Upper lobe of right lung (tissue), 1 donor: ENCODE measurements at regions of chr18 and their contacts with region 1.

Region 1: GRCh38 chr18:62186774-62187542 is at the starts of genes PIGN and RELCH:
- DNase-seq: peak; percentile 95
- ATAC-seq: peak; percentile 98
- H3K4me3 ChIP-seq: peak within 1 kb of the TSS; percentile 97
- H3K27ac ChIP-seq: peak within 1 kb of the TSS; percentile 87
- H3K4me1 ChIP-seq: peaks cover 27% of the 10 kb centered on the region
- H3K27me3 ChIP-seq: no peaks in the 10 kb centered on the region
- CTCF ChIP-seq: no peak
- total RNA-seq, gene PIGN: 25.2 TPM
- total RNA-seq, gene RELCH: 30.0 TPM

Region 2: DNA sequence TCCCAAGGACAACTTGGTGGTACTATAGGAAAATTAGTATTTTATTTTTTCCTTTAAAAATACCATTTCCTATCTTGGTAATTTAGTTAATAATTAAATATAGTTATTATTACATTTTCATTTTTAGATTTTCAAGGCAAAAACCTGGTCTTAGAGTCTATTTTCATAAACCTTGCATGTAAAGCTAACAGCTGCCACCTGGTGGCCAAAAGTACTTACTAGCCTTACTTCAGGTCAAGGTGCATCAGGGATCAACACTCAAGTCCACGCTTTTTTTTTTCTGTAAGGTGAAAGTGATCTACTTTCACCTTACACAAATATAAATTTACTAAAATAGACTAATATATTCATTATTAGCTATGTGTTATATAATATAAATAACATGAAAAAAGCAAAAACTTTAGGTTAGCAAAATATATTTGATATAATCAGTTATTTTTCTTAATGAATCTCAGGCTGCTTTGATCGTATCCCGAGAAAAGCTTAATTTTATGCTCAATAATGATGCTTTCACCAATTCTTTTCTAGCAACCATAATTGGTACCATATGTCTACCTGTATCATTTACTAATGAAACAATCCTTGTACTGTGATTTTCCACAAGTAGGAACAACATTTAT is 62.6 kb after region 1 on chr18:
- intact Hi-C with region 1: loop called (anchors 10 kb)
- DNase-seq: no peak
- ATAC-seq: peak; percentile 76
- H3K4me3 ChIP-seq: no peak overlapping the region
- H3K27ac ChIP-seq: no peak overlapping the region
- H3K4me1 ChIP-seq: no peaks in the 10 kb centered on the region
- H3K27me3 ChIP-seq: no peaks in the 10 kb centered on the region
- CTCF ChIP-seq: peak; percentile 84